ENCODE measurements at regions of chr10 and their contacts with region 1.

Region 1: GRCh38 chr10:44362866-44363711 is 21.8 kb downstream of the CXCL12 start:
- DNase-seq: no peak
- ATAC-seq: no peak
- H3K4me3 ChIP-seq: no peak overlapping the region
- H3K27ac ChIP-seq: no peak overlapping the region
- H3K4me1 ChIP-seq: peaks cover 8% of the 10 kb centered on the region; the same call in 1 of the 2 replicates
- H3K27me3 ChIP-seq: no peaks in the 10 kb centered on the region; the same call in 1 of the 2 replicates
- CTCF ChIP-seq: no peak
- POLR2A ChIP-seq: no peak
- RAD21 ChIP-seq: no peak

Region 2: GRCh38 chr10:44046605-44047004 is 316.5 kb before region 1 on chr10:
- CTCF ChIA-PET with region 1: no interaction called
- POLR2A ChIA-PET with region 1: interaction called, 10 read pairs
- dilution Hi-C with region 1: no loop called
- in situ Hi-C with region 1: no loop called
- intact Hi-C with region 1: no loop called
- DNase-seq: peak; percentile 52
- ATAC-seq: peak; percentile 70
- H3K4me3 ChIP-seq: no peak overlapping the region
- H3K27ac ChIP-seq: no peak overlapping the region
- H3K4me1 ChIP-seq: peaks cover 7% of the 10 kb centered on the region
- H3K27me3 ChIP-seq: peaks cover 14% of the 10 kb centered on the region; the same call in 1 of the 2 replicates
- CTCF ChIP-seq: no peak
- POLR2A ChIP-seq: no peak
- RAD21 ChIP-seq: no peak

Region 3: GRCh38 chr10:44101082-44101481 is 262.0 kb before region 1 on chr10:
- CTCF ChIA-PET with region 1: no interaction called
- POLR2A ChIA-PET with region 1: no interaction called
- dilution Hi-C with region 1: no loop called
- in situ Hi-C with region 1: no loop called
- intact Hi-C with region 1: no loop called
- DNase-seq: no peak
- ATAC-seq: no peak
- H3K4me3 ChIP-seq: no peak overlapping the region
- H3K27ac ChIP-seq: no peak overlapping the region
- H3K4me1 ChIP-seq: no peaks in the 10 kb centered on the region
- H3K27me3 ChIP-seq: no peaks in the 10 kb centered on the region
- CTCF ChIP-seq: no peak
- POLR2A ChIP-seq: no peak
- RAD21 ChIP-seq: no peak

Region 4: GRCh38 chr10:44416021-44416771 is 53.1 kb after region 1 on chr10:
- CTCF ChIA-PET with region 1: no interaction called
- POLR2A ChIA-PET with region 1: interaction called, 15 read pairs
- dilution Hi-C with region 1: no loop called
- in situ Hi-C with region 1: no loop called
- intact Hi-C with region 1: no loop called
- DNase-seq: no peak
- ATAC-seq: no peak; the same call in 1 of the 2 replicates
- H3K4me3 ChIP-seq: no peak overlapping the region
- H3K27ac ChIP-seq: no peak overlapping the region
- H3K4me1 ChIP-seq: peaks cover 2% of the 10 kb centered on the region; the same call in 1 of the 2 replicates
- H3K27me3 ChIP-seq: peaks cover 42% of the 10 kb centered on the region
- CTCF ChIP-seq: no peak
- POLR2A ChIP-seq: no peak
- RAD21 ChIP-seq: no peak